Upper lobe of right lung (tissue), 1 donor: ENCODE measurements at regions of chr2 and their contacts with region 1.

Region 1: DNA sequence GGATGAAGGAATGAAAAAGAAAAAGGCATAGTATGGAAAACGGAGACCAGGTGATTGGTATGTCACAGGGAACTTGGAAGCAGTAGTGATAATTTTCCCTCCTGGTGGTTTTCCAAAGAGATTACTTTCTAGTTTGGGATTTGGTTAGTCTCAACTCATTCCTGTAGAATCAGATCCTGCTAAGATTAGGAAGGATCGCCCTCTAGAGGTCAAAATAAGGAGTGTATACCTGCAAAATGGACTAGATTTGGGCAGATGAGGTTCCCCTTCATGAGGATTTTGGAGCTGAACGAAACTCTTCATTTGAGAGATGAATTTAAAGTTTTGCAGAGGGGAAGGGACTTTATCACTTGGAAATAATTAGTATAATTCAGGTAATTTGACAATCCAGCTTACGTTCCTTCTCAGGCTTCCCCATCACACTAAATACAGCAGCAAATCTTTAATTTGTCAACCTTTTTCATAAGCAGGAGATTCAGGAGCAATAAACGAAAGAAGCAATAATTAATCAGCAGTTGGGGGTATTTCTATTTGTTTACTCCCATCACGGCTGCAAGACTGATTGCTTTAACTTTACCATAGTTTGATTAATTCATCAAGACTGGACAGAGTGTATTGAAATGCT is 65.2 kb downstream of the CCDC195 start:
- DNase-seq: no peak
- ATAC-seq: peak; percentile 81
- H3K4me3 ChIP-seq: no peak overlapping the region
- H3K27ac ChIP-seq: no peak overlapping the region
- H3K4me1 ChIP-seq: no peaks in the 10 kb centered on the region
- H3K27me3 ChIP-seq: no peaks in the 10 kb centered on the region
- CTCF ChIP-seq: peak; percentile 85

Region 2: DNA sequence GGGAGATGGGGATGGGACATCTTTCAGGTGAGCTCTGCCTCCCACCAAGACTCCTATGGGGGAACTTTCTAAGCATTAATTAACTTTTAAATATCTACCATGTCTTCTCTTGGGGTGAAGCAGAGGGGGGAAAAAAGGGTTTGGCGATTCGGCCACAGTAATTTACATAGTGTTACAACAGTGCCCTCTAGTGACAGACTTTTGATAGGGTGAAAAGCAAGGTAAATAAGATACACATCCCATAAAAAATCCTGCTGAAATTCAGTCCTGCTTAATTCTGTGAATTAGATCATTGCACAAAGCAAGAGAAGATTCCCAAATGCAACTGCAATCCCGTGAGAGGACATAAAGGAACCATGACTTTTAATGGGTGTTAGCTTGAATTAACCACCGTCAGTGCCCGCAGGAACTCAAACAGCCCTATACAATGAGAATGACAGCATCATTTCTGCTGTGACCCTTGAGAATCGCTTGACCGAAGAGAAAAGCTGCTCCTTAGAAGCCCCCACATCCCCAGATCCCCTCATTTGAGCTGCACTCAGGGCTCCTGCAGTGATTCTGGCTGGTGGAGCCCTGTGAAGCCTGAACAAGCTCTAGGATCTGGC is 281.8 kb before region 1 on chr2:
- intact Hi-C with region 1: loop called (anchors 10 kb)
- DNase-seq: no peak
- ATAC-seq: peak; percentile 66
- H3K4me3 ChIP-seq: no peak overlapping the region
- H3K27ac ChIP-seq: no peak overlapping the region
- H3K4me1 ChIP-seq: no peaks in the 10 kb centered on the region
- H3K27me3 ChIP-seq: no peaks in the 10 kb centered on the region
- CTCF ChIP-seq: peak; percentile 77